PC-9 (cell line): ENCODE measurements at regions of chr7 and their contacts with region 1.

Region 1: DNA sequence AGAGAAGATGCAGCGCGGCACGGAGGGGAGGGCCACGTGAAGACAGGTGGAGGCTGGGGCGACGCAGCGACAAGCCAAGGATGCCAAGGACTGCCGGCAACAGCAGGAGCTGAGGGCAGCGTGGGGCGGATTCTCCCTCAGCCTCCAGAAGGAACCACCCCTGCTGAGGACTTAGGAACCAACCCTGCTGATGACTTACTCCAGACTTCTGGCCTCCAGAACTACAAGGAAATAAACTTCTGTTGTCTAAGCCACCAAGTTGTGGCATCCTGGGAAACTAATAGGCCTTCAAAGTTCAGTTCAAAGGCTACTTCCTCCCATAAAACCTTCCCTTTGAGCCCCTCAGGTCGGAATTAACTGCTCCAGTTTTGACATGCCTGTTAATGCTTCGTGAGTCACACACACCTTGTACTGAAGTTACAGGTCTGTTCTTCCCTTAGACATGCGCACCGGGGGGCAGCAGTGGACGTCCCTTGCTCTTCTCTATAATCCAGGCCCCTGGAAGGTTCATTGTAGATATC is 88.4 kb upstream of the RHEB start:
- DNase-seq: peak; percentile 26 to 76
- H3K4me3 ChIP-seq: no peak overlapping the region
- H3K27ac ChIP-seq: peak overlapping the region; percentile 58
- H3K4me1 ChIP-seq: peaks cover 27% of the 10 kb centered on the region
- H3K27me3 ChIP-seq: no peaks in the 10 kb centered on the region
- CTCF ChIP-seq: no peak

Region 2: GRCh38 chr7:151592868-151593486 is 15.1 kb before region 1 on chr7:
- CTCF ChIA-PET with region 1: no interaction called
- POLR2A ChIA-PET with region 1: no interaction called
- intact Hi-C with region 1: loop called (anchors 1 kb)
- DNase-seq: peak; percentile 31 to 90
- H3K4me3 ChIP-seq: no peak overlapping the region
- H3K27ac ChIP-seq: peak overlapping the region; percentile 54
- H3K4me1 ChIP-seq: peaks cover 44% of the 10 kb centered on the region
- H3K27me3 ChIP-seq: no peaks in the 10 kb centered on the region
- CTCF ChIP-seq: no peak

Region 3: DNA sequence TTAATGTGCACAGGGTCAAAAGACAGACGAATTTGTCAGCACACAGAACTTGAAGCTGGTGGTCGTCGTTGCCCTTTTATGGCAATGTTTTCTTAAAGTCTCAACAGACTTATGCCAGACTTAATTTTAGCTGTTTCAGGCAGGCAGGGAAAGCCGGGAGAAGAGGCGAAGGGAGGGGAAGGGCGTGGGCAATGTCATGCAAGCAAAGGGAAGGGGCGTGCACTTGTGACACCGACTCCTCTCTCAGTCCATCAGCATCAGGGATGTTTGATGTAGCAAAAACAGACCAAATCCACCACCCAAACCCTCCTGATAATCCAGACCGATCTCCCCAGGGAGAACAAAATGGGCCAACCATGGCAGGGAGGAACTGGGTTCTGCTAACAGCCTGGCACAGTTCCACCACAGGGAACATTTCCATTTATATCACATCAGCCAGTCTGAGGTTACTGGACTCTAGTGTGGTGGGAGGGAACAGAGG is 29.7 kb after region 1 on chr7:
- CTCF ChIA-PET with region 1: no interaction called
- POLR2A ChIA-PET with region 1: interaction called, 16 read pairs
- intact Hi-C with region 1: no loop called
- DNase-seq: no peak
- H3K4me3 ChIP-seq: no peak overlapping the region
- H3K27ac ChIP-seq: no peak overlapping the region
- H3K4me1 ChIP-seq: peaks cover 10% of the 10 kb centered on the region
- H3K27me3 ChIP-seq: no peaks in the 10 kb centered on the region
- CTCF ChIP-seq: no peak